Adrenal gland (tissue), 19 donors: ENCODE measurements at regions of chr15 and their contacts with region 1.

Region 1: GRCh38 chr15:71437404-71438318 is 322.4 kb downstream of the THSD4 start:
- DNase-seq: no peak
- H3K4me3 ChIP-seq: no peak overlapping the region
- H3K27ac ChIP-seq: no peak overlapping the region
- H3K4me1 ChIP-seq: no peaks in the 10 kb centered on the region
- H3K27me3 ChIP-seq: no peaks in the 10 kb centered on the region
- CTCF ChIP-seq: no peak
- POLR2A ChIP-seq: no peak

Region 2: DNA sequence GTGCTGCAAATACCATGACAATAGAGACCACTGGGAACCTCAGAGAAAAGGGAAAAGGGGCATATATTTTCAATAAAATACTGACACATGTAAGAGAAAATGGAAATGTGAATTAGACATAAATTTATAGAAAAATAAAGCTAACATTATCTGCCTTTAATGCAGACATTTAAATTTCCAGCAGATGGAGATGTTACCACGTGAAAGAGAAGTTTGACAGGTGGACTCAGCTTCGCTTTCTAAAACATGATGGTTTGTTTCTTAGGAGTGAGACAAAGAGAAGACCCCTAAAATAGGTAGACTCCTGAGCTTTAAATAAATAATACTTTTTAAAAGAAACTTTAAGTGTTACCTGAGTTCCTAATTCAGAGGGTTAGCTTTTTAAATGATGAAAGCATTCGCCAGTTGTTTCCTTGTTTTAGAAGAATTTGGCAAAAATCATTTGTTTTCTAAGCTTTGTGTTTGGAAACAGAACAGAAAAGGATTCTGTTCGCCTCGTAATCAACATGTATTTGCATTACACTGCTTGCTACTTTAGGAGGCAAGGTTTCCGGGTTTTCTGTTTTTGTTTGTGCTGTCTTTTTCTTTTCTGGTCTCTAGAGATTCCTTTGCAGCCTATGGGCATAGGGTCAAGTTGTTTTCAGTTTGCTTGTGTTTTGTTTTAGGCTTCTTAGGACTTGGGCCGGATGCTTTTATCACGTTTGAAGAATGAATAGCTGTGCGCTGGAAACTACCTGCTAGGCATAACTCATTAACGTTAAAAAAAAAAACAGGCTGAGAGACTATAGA is 51.0 kb before region 1 on chr15:
- intact Hi-C with region 1: loop called (anchors 5 to 10 kb)
- DNase-seq: peak in 1 of 7 donors; percentile 21
- H3K4me3 ChIP-seq: no peak overlapping the region
- H3K27ac ChIP-seq: no peak overlapping the region
- H3K4me1 ChIP-seq: peaks cover 0 to 25% of the 10 kb centered on the region in 2 donors
- H3K27me3 ChIP-seq: no peaks in the 10 kb centered on the region
- CTCF ChIP-seq: peak; percentile 10 to 71 (median 54)
- POLR2A ChIP-seq: no peak